Breast epithelium (tissue), 4 donors: ENCODE measurements at regions of chr10 and their contacts with region 1.

Region 1: GRCh38 chr10:24209946-24210491 is 1.1 kb downstream of the KIAA1217 start:
- DNase-seq: no peak
- H3K4me3 ChIP-seq: peak overlapping the region; percentile 45 to 64 (median 57)
- H3K27ac ChIP-seq: peak overlapping the region; percentile 91 to 95
- H3K4me1 ChIP-seq: peaks cover 3 to 5% of the 10 kb centered on the region in 2 donors
- H3K27me3 ChIP-seq: no peaks in the 10 kb centered on the region
- CTCF ChIP-seq: no peak
- POLR2A ChIP-seq: no peak

Region 2: DNA sequence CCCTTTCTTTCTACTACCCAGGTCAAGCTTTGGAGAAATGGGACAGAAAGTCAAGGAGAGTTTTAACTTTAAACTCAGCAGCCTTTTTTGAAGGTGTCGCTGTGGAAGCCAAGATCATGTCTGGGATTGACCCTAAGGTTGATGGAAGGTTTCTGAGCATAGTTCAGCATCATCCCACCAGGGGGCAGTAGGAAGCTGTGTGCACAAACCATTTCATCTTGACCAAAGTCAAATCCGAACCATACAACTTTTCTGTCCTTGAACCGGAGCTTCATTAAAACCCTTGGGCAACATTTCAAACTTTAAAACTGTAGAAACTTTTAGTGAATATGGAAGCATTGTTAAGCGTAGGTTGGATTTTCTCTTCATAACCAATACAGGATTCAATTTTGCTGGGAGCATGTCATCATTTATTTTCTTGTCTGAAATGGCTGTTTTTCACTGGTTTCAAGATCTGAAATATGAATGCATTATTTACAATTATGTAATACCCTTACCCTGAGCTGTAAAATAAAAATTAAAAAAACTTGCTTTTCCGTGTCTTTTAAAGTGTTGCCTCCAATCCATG is 215.5 kb before region 1 on chr10:
- intact Hi-C with region 1: loop called (anchors 10 kb)
- DNase-seq: peak; percentile 55 to 67
- H3K4me3 ChIP-seq: no peak overlapping the region
- H3K27ac ChIP-seq: no peak overlapping the region
- H3K4me1 ChIP-seq: no peaks in the 10 kb centered on the region
- H3K27me3 ChIP-seq: no peaks in the 10 kb centered on the region
- CTCF ChIP-seq: peak; percentile 80 to 96 (median 90)
- POLR2A ChIP-seq: no peak

Region 3: DNA sequence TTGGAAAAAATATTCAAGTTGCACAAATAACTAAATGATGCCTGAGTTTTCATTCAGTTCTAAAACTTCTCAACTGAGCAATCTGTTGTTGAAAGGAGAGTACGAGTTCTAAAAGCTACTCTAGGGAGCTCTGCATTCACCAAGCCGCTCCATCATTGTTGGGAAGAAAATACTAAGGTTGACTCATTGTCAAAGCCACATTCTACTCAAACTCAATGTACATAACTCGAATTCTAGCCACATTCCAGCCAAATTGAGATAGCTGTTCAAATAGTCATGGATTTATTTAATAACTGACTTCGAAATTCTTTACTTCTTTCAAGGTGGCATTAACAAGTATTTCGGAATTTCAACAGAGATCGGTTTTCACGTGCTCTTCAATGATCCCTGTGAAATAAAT is 62.4 kb after region 1 on chr10:
- intact Hi-C with region 1: loop called (anchors 2 kb)
- DNase-seq: no peak
- H3K4me3 ChIP-seq: no peak overlapping the region
- H3K27ac ChIP-seq: no peak overlapping the region
- H3K4me1 ChIP-seq: no peaks in the 10 kb centered on the region
- H3K27me3 ChIP-seq: no peaks in the 10 kb centered on the region
- CTCF ChIP-seq: no peak
- POLR2A ChIP-seq: no peak

Region 4: DNA sequence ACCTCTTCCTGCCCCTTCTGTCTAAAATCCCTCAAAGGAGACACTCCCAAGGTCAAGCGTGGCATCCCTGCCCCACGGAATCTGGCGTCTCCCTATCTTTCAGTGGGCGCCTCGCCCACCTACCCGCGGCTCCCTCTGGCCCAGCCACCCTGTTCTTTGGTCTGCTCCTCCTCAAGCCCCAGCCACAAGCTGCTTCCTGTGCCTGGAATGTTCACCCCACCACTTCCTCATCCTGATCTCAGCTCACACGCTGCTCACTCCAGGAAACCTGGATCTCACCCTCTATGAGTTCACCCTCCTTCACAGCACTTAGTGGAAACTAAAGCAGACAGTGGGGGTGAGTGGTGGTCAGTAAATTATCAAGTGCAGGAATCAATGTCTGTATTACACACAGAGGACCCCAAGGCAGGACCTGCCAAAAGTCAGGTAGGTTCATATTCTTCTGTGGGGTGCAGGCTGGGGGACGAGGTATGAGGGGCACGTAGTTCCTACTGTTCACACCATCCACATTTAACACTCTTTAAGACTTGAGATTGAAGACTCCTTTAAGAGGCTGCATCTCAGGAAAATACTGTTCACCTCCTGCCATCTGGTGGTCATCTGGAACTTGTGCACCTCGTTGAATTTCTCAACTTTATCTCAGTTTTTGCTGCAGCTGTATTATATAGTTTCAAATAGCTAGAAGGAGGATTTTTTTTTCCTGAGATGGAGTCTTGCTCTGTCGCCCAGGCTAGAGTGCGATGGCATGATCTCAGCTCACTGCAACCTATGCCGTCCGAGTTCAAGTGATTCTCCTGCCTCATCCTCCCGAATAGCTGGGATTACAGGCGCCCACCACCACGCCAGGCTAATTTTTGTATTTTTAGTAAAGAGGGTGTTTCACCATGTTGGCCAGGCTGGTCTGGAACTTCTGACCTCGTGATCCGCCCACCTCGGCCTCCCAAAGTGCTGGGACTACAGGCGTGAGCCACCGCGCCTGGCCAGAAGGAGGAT is 347.0 kb after region 1 on chr10:
- intact Hi-C with region 1: no loop called
- DNase-seq: no peak
- H3K4me3 ChIP-seq: no peak overlapping the region
- H3K27ac ChIP-seq: peak overlapping the region in 1 of 2 donors; percentile 41
- H3K4me1 ChIP-seq: peaks cover 6 to 20% of the 10 kb centered on the region in 2 donors
- H3K27me3 ChIP-seq: no peaks in the 10 kb centered on the region
- CTCF ChIP-seq: peak; percentile 48 to 70 (median 69)
- POLR2A ChIP-seq: no peak